GM18951 (cell line): ENCODE measurements at regions of chr15 and their contacts with region 1.

Region 1: DNA sequence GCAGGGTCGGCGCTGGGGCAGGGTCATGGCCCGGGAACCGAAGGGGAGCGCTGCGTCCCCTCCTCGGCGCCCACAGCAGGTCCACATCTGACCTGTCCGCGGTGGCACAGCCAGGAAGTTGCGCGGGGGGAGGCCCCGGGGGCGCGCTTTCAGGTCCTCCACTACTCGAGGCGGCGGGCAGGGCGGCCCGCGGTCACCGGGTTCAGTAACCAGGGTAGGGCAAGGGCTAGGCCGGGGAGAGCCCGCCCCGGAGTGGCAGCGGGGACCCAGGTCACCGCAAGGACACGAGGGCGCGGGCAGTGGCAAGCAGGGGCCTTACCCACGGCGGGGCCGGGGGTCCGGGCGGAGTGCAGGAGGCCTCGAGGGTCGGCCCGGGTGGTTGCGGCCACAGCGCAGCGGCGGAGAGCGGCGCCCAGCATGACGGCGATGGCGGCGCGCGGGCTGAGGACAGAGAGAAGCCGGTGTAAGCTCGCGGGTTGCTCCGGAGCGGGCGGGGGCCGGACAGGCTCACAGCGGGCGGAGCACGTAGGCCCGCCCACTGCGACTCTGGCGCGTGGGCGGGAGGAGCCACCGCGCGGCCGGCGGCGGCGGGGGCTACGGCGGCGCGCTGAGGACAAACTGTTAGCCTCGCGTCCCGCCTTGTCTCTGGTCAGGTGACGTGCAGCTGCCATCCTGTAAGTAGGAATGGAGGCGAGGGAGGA is at the start of gene COX5A:
- POLR2A ChIP-seq: peak; percentile 94

Region 2: DNA sequence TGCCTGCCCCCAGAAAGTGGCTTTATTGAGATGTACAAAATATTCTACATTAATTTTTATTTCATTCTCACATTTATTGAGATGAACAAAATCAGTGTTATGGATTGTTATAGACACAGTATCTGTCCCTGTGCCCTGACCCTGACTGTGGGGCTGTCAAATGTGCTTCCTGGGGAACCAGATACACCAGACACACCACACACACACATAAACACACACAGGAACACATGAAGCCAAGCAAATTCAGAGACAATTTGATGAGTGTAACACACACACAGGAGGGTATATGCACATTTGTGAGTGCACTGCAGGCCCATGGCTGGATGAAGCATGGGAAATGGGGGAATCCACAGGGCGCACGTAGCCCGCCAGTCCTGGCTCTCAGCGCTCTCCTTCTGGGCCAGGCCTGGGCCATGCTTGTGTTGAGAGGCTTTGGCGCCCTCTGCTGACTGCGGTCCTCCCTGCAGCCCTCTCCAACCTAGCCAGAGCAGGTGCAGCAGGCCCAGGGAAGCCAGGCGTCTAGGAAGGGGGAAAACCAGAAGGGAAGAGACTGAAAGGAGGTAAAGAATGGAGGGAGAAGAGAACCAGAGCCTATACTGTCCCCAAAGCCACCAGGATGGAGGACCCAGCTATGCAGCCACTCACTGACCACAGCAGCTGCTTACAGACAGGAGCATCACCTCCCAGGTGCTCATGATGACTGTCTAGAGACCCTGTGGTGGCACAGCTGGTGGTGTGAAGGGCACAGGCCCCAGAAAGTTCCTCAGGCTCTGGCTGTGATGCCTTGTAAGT is 1029.5 kb before region 1 on chr15:
- in situ Hi-C with region 1: no loop called
- POLR2A ChIP-seq: no peak

Region 3: GRCh38 chr15:74635228-74635627 is 302.5 kb before region 1 on chr15:
- in situ Hi-C with region 1: loop called (anchors 25 kb)
- POLR2A ChIP-seq: no peak